CD4-positive, alpha-beta T cell (primary cell): ENCODE measurements at regions of chr3 and their contacts with region 1.

Region 1: DNA sequence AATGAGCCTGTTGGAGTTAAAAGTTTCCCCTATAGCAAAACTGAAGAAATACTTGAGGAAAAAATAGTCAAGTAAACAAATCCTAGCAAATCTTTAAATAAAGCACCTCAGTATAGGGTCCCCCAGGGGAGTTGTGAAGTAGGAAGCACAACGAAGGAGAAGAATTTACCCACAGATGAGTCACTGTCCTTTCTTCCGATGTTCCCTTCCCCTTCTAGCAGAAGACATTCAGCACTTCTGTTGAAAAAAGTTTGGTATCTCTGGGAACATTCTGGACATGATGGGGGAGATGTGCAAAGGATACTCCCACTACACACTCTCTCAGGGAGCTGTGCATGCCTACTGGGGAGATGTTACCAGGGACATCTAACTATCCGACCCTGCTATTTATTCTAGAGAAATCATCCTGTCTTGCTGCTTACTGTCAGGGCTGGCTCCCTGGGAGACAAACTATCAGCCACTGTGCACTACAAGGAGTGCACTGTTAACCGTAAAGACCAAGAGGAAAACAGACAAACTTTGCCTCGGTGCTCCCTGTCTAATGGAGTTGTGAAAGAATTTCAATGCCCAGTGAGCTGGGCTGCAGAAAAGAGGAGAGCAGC is 93.8 kb downstream of the RFTN1 start:
- DNase-seq: no peak
- ATAC-seq: no peak
- H3K4me3 ChIP-seq: no peak overlapping the region
- H3K4me3 Mint-ChIP-seq: no peak overlapping the region
- H3K27ac ChIP-seq: no peak overlapping the region
- H3K27ac Mint-ChIP-seq: no peak overlapping the region
- H3K4me1 ChIP-seq: no peaks in the 10 kb centered on the region
- H3K4me1 Mint-ChIP-seq: peaks cover 39% of the 10 kb centered on the region
- H3K27me3 ChIP-seq: no peaks in the 10 kb centered on the region
- H3K27me3 Mint-ChIP-seq: no peaks in the 10 kb centered on the region
- CTCF ChIP-seq: no peak

Region 2: DNA sequence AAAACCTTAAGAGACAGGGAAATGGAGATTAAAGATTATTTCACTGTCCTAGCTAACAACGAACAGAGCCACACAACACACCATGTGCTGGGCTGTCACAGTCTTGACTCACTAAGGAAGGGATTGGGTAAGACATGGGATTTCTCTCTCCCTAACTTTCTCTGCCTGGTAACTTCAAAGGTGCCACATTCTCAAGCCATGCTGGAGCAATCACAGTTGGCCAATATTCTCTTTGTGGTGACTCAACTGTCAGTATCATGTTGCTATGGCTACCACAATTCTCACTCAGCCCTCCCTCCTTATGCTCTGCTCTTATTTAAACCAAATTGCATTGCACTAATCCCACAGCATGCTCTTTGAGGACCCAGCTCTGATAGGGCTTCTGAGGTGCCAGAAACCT is 80.7 kb before region 1 on chr3:
- CTCF ChIA-PET with region 1: no interaction called
- POLR2A ChIA-PET with region 1: no interaction called
- intact Hi-C with region 1: no loop called
- DNase-seq: peak in 4 of 14 experiments; percentile 32 to 70 (median 62)
- ATAC-seq: peak; percentile 65
- H3K4me3 ChIP-seq: no peak overlapping the region
- H3K4me3 Mint-ChIP-seq: peak overlapping the region; percentile 70
- H3K27ac ChIP-seq: peak overlapping the region; percentile 47 to 66
- H3K27ac Mint-ChIP-seq: peak overlapping the region; percentile 82
- H3K4me1 ChIP-seq: peaks cover 43% of the 10 kb centered on the region
- H3K4me1 Mint-ChIP-seq: peaks cover 81% of the 10 kb centered on the region
- H3K27me3 ChIP-seq: no peaks in the 10 kb centered on the region
- H3K27me3 Mint-ChIP-seq: no peaks in the 10 kb centered on the region
- CTCF ChIP-seq: no peak

Region 3: DNA sequence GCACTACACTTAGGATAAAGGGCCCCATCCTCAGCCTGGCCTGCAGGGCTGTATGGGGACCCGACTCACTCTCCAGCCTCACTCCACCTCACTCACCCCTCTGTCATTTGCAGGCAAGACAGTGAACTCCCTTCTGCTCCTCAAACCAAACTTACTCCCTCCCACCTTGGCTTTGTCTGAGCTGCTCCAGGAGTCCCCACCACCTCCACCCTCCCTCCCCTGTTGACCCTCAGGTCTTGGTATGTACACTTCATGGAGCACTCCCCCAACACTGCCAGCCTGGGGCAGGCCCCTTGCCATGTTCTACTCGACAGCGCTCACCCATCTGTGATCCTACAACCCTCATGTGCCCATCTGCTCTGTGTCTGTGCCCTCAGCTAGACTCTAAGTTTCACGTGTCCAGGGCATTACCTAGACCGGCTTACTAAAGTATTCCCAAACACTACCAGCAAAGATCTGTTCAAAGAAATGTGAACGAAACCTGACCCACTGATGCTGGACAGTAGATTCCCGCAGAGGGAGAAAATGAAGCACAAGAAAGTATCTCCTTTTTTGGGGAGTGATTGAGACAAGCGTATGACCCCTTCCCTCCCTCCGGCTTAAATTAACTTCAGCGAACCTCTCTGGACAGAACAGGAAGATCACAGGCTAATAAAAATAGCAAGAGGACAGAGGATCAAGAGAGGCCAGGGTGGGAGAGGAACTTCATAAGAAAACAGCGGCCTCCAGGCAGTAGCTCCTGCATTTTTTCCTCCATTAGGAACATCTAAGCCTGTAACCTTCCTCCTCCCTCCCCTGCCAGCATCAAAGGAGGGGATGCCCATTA is 19.4 kb before region 1 on chr3:
- CTCF ChIA-PET with region 1: no interaction called
- POLR2A ChIA-PET with region 1: no interaction called
- intact Hi-C with region 1: loop called in 1 of 2 experiments (anchors 2 kb)
- DNase-seq: no peak
- ATAC-seq: no peak
- H3K4me3 ChIP-seq: no peak overlapping the region
- H3K4me3 Mint-ChIP-seq: no peak overlapping the region
- H3K27ac ChIP-seq: no peak overlapping the region
- H3K27ac Mint-ChIP-seq: peak overlapping the region; percentile 6
- H3K4me1 ChIP-seq: no peaks in the 10 kb centered on the region
- H3K4me1 Mint-ChIP-seq: peaks cover 58% of the 10 kb centered on the region
- H3K27me3 ChIP-seq: no peaks in the 10 kb centered on the region
- H3K27me3 Mint-ChIP-seq: no peaks in the 10 kb centered on the region
- CTCF ChIP-seq: no peak